CD8-positive, alpha-beta T cell (primary cell): ENCODE measurements at regions of chr10 and their contacts with region 1.

Region 1: GRCh38 chr10:59625721-59626522 is 83.7 kb downstream of the SLC16A9 start:
- DNase-seq: peak in 8 of 9 experiments; percentile 3 to 75 (median 34)
- ATAC-seq: peak; percentile 66
- H3K4me3 ChIP-seq: no peak overlapping the region
- H3K4me3 Mint-ChIP-seq: no peak overlapping the region
- H3K27ac ChIP-seq: no peak overlapping the region
- H3K27ac Mint-ChIP-seq: no peak overlapping the region
- H3K4me1 ChIP-seq: no peaks in the 10 kb centered on the region
- H3K4me1 Mint-ChIP-seq: peaks cover 3% of the 10 kb centered on the region
- H3K27me3 ChIP-seq: no peaks in the 10 kb centered on the region
- H3K27me3 Mint-ChIP-seq: peaks cover 2% of the 10 kb centered on the region
- CTCF ChIP-seq: peak; percentile 80

Region 2: GRCh38 chr10:59666310-59666709 is 40.4 kb after region 1 on chr10:
- CTCF ChIA-PET with region 1: no interaction called
- POLR2A ChIA-PET with region 1: no interaction called
- intact Hi-C with region 1: no loop called
- DNase-seq: no peak
- ATAC-seq: no peak
- H3K4me3 ChIP-seq: no peak overlapping the region
- H3K4me3 Mint-ChIP-seq: no peak overlapping the region
- H3K27ac ChIP-seq: no peak overlapping the region
- H3K27ac Mint-ChIP-seq: no peak overlapping the region
- H3K4me1 ChIP-seq: no peaks in the 10 kb centered on the region
- H3K4me1 Mint-ChIP-seq: no peaks in the 10 kb centered on the region
- H3K27me3 ChIP-seq: no peaks in the 10 kb centered on the region
- H3K27me3 Mint-ChIP-seq: no peaks in the 10 kb centered on the region
- CTCF ChIP-seq: no peak

Region 3: DNA sequence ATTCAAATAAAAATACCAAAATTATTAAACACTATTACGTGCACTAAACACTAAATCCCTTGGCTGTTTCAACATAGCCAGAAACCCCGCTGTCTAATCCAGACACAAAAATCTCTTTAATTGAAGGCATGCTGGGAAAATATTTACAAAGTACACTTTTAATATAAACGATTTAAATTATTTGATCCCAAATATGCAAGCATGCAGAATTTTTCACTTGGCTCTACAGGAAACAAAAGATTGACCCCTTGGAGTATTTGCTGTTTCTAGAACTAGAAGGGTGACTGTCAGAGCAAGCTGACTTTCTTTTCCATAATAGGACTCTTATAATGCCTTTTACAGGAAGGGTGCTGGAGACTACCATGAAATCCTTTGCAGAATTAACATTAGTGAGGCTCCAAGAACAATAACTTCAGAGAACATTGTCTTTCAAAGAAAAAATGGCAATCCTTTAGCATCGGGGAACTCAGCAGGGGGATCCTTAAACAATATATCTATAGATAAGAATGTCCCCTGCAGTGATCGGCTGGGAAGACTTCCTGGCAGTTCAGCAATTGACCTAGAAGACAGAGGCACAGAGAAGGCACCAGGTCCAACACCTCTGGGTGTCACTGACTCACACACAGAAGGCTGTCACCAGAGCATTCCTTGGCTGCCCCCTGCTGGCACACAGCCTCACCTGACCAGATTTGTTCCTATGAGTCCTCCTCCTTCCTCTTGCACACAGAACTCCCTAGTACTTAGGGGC is 183.1 kb after region 1 on chr10:
- CTCF ChIA-PET with region 1: no interaction called
- POLR2A ChIA-PET with region 1: interaction called, 3 read pairs
- intact Hi-C with region 1: loop called (anchors 5 to 10 kb)
- DNase-seq: peak in 8 of 9 experiments; percentile 4 to 55 (median 42)
- ATAC-seq: peak; percentile 69
- H3K4me3 ChIP-seq: no peak overlapping the region
- H3K4me3 Mint-ChIP-seq: no peak overlapping the region
- H3K27ac ChIP-seq: no peak overlapping the region
- H3K27ac Mint-ChIP-seq: peak overlapping the region; percentile 57
- H3K4me1 ChIP-seq: no peaks in the 10 kb centered on the region
- H3K4me1 Mint-ChIP-seq: no peaks in the 10 kb centered on the region
- H3K27me3 ChIP-seq: no peaks in the 10 kb centered on the region
- H3K27me3 Mint-ChIP-seq: no peaks in the 10 kb centered on the region
- CTCF ChIP-seq: peak; percentile 36

Region 4: DNA sequence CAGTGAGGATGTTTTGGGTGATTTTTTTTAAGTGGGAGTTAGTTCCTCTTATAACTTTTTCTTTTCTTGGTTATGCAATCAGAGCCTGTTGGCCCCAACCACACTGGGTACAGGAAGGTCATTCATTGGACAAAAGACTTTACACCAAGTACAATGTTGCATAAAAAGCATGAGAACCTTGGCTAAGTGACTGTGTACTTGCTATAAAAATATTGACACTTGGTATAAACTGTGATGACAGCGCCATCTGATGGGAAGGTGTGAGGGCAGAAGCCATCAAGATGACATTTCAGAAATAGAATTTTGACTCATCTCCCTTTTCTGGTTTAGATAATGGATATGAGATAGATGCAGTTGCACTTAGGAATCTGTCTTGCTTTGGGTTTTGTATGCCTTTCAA is 406.8 kb after region 1 on chr10:
- CTCF ChIA-PET with region 1: interaction called, 19 read pairs
- POLR2A ChIA-PET with region 1: no interaction called
- intact Hi-C with region 1: loop called in 1 of 2 experiments (anchors 1 kb)
- DNase-seq: peak in 5 of 9 experiments; percentile 22 to 58 (median 28)
- ATAC-seq: no peak
- H3K4me3 ChIP-seq: no peak overlapping the region
- H3K4me3 Mint-ChIP-seq: no peak overlapping the region
- H3K27ac ChIP-seq: no peak overlapping the region
- H3K27ac Mint-ChIP-seq: no peak overlapping the region
- H3K4me1 ChIP-seq: no peaks in the 10 kb centered on the region
- H3K4me1 Mint-ChIP-seq: no peaks in the 10 kb centered on the region
- H3K27me3 ChIP-seq: no peaks in the 10 kb centered on the region
- H3K27me3 Mint-ChIP-seq: peaks cover 4% of the 10 kb centered on the region
- CTCF ChIP-seq: peak; percentile 34

Region 5: DNA sequence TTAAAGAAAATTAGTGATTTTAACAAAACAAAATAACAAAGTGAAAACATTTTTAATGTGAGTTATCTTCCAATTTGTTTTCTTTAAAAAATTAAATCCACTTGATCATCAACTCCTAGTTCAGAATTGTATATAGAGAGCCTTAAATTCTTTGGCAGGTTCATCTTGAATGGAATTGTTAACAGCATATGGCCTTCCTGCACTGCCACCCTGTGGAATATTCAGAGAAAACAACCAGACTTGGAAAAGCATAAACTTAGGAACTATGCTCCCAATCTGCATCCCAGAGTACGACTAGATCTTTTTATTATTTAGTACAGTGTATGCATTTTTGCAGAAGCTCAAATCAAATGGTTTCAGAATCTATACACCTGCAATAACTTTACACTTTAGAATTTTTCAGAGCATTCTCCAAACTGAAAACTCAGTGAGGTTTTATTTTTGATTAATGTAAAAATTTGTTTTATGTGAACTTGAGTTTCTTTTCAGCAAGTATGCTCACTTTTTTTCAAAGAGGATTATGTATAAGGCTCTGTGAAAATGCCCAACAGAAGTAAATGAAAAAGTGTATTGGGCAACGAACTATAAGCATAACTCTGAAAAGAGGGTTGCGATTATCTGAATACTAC is 808.6 kb after region 1 on chr10:
- CTCF ChIA-PET with region 1: no interaction called
- POLR2A ChIA-PET with region 1: no interaction called
- intact Hi-C with region 1: loop called (anchors 1 to 2 kb)
- DNase-seq: peak in 2 of 9 experiments; percentile 9 to 22
- ATAC-seq: no peak
- H3K4me3 ChIP-seq: no peak overlapping the region
- H3K4me3 Mint-ChIP-seq: no peak overlapping the region
- H3K27ac ChIP-seq: no peak overlapping the region
- H3K27ac Mint-ChIP-seq: no peak overlapping the region
- H3K4me1 ChIP-seq: no peaks in the 10 kb centered on the region
- H3K4me1 Mint-ChIP-seq: no peaks in the 10 kb centered on the region
- H3K27me3 ChIP-seq: no peaks in the 10 kb centered on the region
- H3K27me3 Mint-ChIP-seq: no peaks in the 10 kb centered on the region
- CTCF ChIP-seq: no peak

Region 6: DNA sequence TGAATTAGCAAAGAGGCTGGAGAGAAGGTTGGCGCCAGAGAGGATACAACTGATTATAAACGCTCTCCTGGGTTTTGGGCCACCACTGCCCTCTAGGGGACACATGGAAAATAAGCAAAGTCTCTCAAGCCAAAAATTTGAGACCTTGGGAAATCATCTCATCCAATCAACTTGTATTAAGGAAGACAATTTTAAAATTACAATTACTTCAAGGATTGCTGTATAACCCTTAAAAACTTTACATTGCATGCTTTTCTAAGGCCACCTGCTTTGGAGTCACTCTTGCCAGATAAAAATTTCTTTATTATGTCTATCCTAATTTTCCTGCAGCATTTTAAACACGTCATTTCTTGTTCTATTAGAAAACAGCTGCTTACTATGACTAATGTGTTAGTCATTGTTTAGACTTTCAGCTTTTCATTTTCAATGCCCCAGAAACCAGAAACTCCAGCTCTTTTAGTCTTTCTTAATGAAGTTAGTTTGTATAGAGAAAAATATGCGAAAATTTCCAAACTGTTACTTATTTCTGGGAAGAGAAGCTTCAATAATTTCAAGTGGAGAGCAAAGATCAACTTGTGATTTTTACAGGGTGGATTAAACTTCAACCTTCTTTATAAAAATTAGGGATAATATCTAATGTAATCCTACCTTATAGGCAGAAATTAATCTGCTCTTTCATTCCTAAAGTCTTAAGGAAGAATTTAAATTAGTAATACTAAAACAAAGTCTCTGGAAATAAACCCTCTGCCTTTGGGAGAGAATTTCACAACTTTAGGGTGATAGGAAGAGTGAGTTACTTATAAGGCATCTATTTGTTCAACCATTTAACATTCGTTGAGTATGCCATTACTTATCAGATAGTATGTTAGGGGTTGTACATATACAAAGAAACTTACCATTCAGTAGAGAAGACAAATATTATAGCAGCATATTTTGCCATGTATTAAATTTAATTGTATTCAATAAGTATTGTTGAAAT is 1338.6 kb after region 1 on chr10:
- CTCF ChIA-PET with region 1: no interaction called
- POLR2A ChIA-PET with region 1: no interaction called
- intact Hi-C with region 1: loop called (anchors 2 to 5 kb)
- DNase-seq: peak in 6 of 9 experiments; percentile 20 to 60 (median 40)
- ATAC-seq: peak; percentile 51
- H3K4me3 ChIP-seq: no peak overlapping the region
- H3K4me3 Mint-ChIP-seq: no peak overlapping the region
- H3K27ac ChIP-seq: no peak overlapping the region
- H3K27ac Mint-ChIP-seq: no peak overlapping the region
- H3K4me1 ChIP-seq: no peaks in the 10 kb centered on the region
- H3K4me1 Mint-ChIP-seq: no peaks in the 10 kb centered on the region
- H3K27me3 ChIP-seq: no peaks in the 10 kb centered on the region
- H3K27me3 Mint-ChIP-seq: peaks cover 9% of the 10 kb centered on the region
- CTCF ChIP-seq: peak; percentile 65

Region 7: GRCh38 chr10:61541960-61542359 is 1916.0 kb after region 1 on chr10:
- CTCF ChIA-PET with region 1: no interaction called
- POLR2A ChIA-PET with region 1: no interaction called
- intact Hi-C with region 1: no loop called
- DNase-seq: no peak
- ATAC-seq: no peak
- H3K4me3 ChIP-seq: no peak overlapping the region
- H3K4me3 Mint-ChIP-seq: no peak overlapping the region
- H3K27ac ChIP-seq: no peak overlapping the region
- H3K27ac Mint-ChIP-seq: no peak overlapping the region
- H3K4me1 ChIP-seq: no peaks in the 10 kb centered on the region
- H3K4me1 Mint-ChIP-seq: no peaks in the 10 kb centered on the region
- H3K27me3 ChIP-seq: no peaks in the 10 kb centered on the region
- H3K27me3 Mint-ChIP-seq: no peaks in the 10 kb centered on the region
- CTCF ChIP-seq: no peak